K562 (cell line): ENCODE measurements at regions of chr1 and their contacts with region 1.

Region 1: GRCh38 chr1:59699227-59699847 is 115.4 kb upstream of the HOOK1 start:
- DNase-seq: peak; percentile 45 to 58 (median 50)
- ATAC-seq: 0 out of 3 replicates have a peak, but pooled peaks have one; percentile 42
- H3K4me3 ChIP-seq: no peak overlapping the region
- H3K27ac ChIP-seq: no peak overlapping the region
- H3K4me1 ChIP-seq: no peaks in the 10 kb centered on the region
- H3K27me3 ChIP-seq: no peaks in the 10 kb centered on the region; a peak in 2 of 5 replicates
- CTCF ChIP-seq: peak; percentile 49 to 87 (median 78); a peak in 5 of 6 replicates
- EP300 ChIP-seq: no peak
- POLR2A ChIP-seq: no peak
- RAD21 ChIP-seq: peak; percentile 90 to 91

Region 2: GRCh38 chr1:59186656-59187055 is 512.7 kb before region 1 on chr1:
- CTCF ChIA-PET with region 1: no interaction called
- POLR2A ChIA-PET with region 1: no interaction called
- in situ Hi-C with region 1: no loop called
- intact Hi-C with region 1: loop called (anchors 10 kb)
- DNase-seq: no peak
- ATAC-seq: no peak; the same call in 2 of the 3 replicates
- H3K4me3 ChIP-seq: no peak overlapping the region
- H3K27ac ChIP-seq: no peak overlapping the region
- H3K4me1 ChIP-seq: no peaks in the 10 kb centered on the region
- H3K27me3 ChIP-seq: no peaks in the 10 kb centered on the region
- CTCF ChIP-seq: peak in 1 of 3 experiments; percentile 4; a peak in 1 of 6 replicates
- EP300 ChIP-seq: no peak
- POLR2A ChIP-seq: no peak
- RAD21 ChIP-seq: peak; percentile 20 to 34; a peak in 2 of 4 replicates

Region 3: GRCh38 chr1:59759156-59759925 is 60.0 kb after region 1 on chr1:
- CTCF ChIA-PET with region 1: no interaction called
- POLR2A ChIA-PET with region 1: no interaction called
- in situ Hi-C with region 1: no loop called
- intact Hi-C with region 1: loop called (anchors 1 kb)
- DNase-seq: peak; percentile 72 to 76 (median 75)
- ATAC-seq: peak; percentile 94
- H3K4me3 ChIP-seq: no peak overlapping the region
- H3K27ac ChIP-seq: no peak overlapping the region
- H3K4me1 ChIP-seq: no peaks in the 10 kb centered on the region
- H3K27me3 ChIP-seq: no peaks in the 10 kb centered on the region; a peak in 1 of 5 replicates
- CTCF ChIP-seq: peak; percentile 72 to 91 (median 90)
- EP300 ChIP-seq: no peak
- POLR2A ChIP-seq: no peak
- RAD21 ChIP-seq: peak; percentile 92 to 94